B cell (primary cell): ENCODE measurements at regions of chr11 and their contacts with region 1.

Region 1: DNA sequence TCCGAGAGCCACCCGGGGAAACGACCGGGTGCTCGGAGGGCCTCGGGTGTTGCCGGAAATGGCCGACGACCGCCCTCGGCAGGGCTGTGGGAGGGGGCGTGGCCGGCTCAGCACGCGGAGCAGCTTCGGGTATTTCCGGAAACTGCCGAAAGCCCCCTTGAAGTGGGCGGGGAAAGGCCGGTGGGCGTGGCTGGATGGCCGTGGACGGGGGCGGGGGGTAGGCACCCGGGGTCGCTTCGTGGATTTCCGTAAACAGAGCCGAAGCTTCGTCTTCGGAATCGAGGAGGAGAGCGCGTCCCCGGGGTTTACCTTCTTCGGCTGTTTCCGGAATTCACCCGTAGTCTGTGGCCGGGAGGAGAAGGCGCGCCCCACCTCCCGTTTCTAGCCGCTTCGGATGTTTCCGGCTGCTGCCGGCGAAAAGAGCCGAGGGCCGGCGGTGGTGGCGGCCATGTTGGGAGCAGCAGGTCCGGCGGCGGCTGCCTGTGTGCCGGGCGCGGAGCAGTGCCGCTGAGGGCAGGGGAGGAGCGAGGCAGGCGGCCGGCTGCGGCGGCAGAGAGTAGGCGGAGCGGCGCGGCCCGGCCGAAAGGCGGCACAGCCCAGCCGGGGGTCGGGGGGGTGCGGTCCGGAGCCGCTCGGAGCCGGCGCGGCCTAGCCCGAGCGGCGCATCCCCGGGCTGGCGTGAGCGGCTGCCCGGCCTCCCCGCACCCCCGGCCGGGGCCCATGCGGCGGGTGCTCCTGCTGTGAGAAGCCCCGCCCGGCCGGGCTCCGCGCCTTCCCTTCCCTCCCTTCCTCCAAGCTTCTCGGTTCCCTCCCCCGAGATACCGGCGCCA is at the start of gene MARK2:
- DNase-seq: peak; percentile 100
- ATAC-seq: peak; percentile 82
- H3K4me3 ChIP-seq: peak within 1 kb of the TSS; percentile 67 to 94 (median 90)
- H3K4me3 Mint-ChIP-seq: peak within 1 kb of the TSS; percentile 91
- H3K27ac ChIP-seq: peak within 1 kb of the TSS; percentile 82 to 91
- H3K27ac Mint-ChIP-seq: peak within 1 kb of the TSS; percentile 94
- H3K4me1 ChIP-seq: peaks cover 38 to 46% of the 10 kb centered on the region in 2 donors
- H3K4me1 Mint-ChIP-seq: peaks cover 59% of the 10 kb centered on the region
- H3K27me3 ChIP-seq: no peaks in the 10 kb centered on the region
- H3K27me3 Mint-ChIP-seq: no peaks in the 10 kb centered on the region
- CTCF ChIP-seq: no peak
- total RNA-seq, gene MARK2: 55.9 and 58.1 TPM in 2 replicates

Region 2: DNA sequence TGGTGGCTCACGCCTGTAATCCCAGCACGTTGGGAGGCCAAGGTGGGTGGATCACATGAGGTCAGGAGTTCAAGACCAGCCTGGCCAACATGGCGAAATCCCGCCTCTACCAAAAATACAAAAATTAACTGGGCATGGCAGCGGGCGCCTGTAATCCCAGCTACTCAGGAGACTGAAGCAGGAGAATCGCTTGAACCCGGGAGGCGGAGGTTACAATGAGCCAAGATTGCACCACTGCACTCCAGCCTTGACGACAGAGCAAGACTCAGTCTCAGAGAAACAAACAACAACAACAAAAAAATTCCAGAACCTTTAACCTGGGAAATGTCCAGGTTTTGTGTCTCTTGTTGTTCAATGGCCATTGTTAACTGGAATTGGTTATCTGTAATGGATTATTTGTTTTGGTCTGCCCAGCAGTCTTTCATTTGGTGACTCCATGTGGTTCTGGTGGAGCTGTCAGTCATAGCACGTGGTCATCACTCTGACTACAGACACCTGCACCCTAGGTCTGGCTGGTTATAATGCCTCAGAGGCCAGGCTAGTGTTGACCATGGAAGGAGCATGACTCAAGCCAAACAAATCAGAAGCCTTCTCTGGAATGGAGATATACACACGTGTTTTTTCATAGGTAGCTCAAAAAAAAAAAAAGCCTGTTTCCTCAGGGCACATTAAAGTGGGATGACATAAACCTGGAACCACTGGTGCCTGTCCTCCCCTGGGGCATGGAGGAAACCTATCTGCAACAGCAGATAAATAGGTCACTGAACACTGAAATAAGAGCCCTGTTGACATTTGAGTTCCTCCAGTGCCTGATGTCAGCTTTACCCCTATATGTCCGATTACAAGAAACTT is 216.7 kb before region 1 on chr11:
- CTCF ChIA-PET with region 1: no interaction called
- POLR2A ChIA-PET with region 1: no interaction called
- intact Hi-C with region 1: no loop called
- DNase-seq: no peak
- ATAC-seq: no peak
- H3K4me3 ChIP-seq: no peak overlapping the region
- H3K4me3 Mint-ChIP-seq: no peak overlapping the region
- H3K27ac ChIP-seq: no peak overlapping the region
- H3K27ac Mint-ChIP-seq: no peak overlapping the region
- H3K4me1 ChIP-seq: no peaks in the 10 kb centered on the region
- H3K4me1 Mint-ChIP-seq: no peaks in the 10 kb centered on the region
- H3K27me3 ChIP-seq: peaks cover 0 to 5% (median 0%) of the 10 kb centered on the region in 4 experiments
- H3K27me3 Mint-ChIP-seq: no peaks in the 10 kb centered on the region
- CTCF ChIP-seq: no peak

Region 3: DNA sequence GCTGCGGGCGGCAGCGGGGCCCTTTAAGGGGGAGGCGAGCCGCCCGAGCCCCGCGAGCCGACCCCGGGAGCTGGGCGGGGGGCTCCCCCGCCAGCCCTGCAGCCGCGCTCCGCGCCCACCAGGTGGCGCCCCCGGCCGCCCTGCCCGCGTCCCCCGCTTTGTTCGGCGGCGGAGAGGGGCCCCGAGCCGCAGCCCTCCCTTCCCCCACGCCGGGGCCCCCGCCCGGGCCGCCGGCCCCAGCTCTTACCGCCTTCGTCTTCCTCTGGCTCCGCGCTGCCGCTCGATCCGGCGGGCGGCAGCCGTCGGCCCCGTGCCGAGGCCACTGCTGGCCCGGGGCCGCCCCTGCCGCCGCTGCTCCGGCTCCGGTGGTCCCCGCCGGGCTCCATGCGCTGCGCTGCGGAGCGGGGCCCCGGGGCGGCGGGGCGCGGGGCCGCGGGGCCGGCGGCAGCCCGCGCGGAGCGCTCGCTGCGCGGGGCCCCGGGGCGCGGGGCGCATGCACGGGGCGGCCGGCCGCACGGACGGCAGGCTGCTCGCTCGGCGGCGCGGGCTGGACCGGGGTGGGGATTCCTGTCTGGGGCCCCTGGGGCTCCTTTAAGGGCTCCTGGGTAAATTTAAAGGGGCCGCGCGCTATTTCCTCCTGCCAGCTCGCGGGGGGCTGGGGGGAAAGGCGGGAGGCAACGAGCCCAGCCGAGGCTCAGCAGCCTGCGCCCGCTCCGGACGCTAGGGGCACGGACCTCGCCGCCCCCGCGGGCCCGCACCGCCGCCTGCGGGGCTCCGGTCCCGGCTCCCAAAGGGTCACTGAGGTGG is 70.5 kb before region 1 on chr11 and contains the start of gene ZFTA:
- CTCF ChIA-PET with region 1: interaction called, 19 read pairs
- POLR2A ChIA-PET with region 1: interaction called, 4 read pairs
- intact Hi-C with region 1: loop called (anchors 1 kb)
- DNase-seq: peak; percentile 80
- ATAC-seq: peak; percentile 68
- H3K4me3 ChIP-seq: peak within 1 kb of the TSS; percentile 18 to 89 (median 67)
- H3K4me3 Mint-ChIP-seq: peak within 1 kb of the TSS; percentile 89
- H3K27ac ChIP-seq: peak within 1 kb of the TSS in 1 of 2 donors; percentile 44
- H3K27ac Mint-ChIP-seq: peak within 1 kb of the TSS; percentile 78
- H3K4me1 ChIP-seq: peaks cover 14 to 21% of the 10 kb centered on the region in 2 donors
- H3K4me1 Mint-ChIP-seq: peaks cover 13% of the 10 kb centered on the region
- H3K27me3 ChIP-seq: peaks cover 0 to 17% (median 2%) of the 10 kb centered on the region in 4 experiments
- H3K27me3 Mint-ChIP-seq: peaks cover 10% of the 10 kb centered on the region
- CTCF ChIP-seq: peak; percentile 67
- total RNA-seq, gene ZFTA: 11.8 and 13.3 TPM in 2 replicates

Region 4: GRCh38 chr11:63906585-63906984 is 67.7 kb after region 1 on chr11:
- CTCF ChIA-PET with region 1: interaction called, 22 read pairs
- POLR2A ChIA-PET with region 1: interaction called, 3 read pairs
- intact Hi-C with region 1: loop called (anchors 1 kb)
- DNase-seq: peak; percentile 54
- ATAC-seq: peak; percentile 47
- H3K4me3 ChIP-seq: no peak overlapping the region
- H3K4me3 Mint-ChIP-seq: no peak overlapping the region
- H3K27ac ChIP-seq: no peak overlapping the region
- H3K27ac Mint-ChIP-seq: no peak overlapping the region
- H3K4me1 ChIP-seq: no peaks in the 10 kb centered on the region
- H3K4me1 Mint-ChIP-seq: no peaks in the 10 kb centered on the region
- H3K27me3 ChIP-seq: no peaks in the 10 kb centered on the region
- H3K27me3 Mint-ChIP-seq: no peaks in the 10 kb centered on the region
- CTCF ChIP-seq: peak; percentile 29

Region 5: DNA sequence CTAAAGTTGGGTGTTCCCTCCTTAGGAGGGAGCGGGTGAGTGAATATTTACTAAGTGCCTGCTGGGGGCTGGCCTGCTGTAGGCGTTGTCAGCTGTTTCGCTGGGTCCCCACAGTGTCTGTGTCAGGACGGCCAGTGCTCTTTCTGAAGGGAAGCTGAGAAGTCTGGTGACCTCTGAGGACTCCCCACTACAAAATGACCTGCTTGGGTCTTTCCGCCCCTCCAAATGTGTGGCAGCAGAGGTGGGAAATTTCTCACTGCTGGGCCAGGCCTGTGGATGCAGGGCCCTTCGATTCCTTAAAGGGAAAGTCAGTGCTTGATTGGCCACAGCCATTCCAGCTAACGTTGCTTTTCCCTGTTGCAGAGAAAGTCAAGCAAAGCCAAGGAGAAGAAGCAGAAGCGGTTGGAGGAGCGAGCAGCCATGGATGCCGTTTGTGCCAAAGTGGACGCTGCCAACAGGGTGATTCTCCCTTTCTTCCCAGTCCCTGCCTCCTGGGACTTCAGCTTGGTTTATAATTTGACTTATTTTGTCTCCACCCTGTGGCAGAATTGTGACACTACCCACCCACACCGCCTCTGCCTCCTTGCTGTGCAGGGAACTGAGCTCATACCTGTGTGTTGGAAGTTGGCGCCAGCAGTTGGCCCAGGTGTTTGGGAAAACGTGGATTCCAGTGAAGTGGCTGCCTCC is 106.7 kb after region 1 on chr11:
- CTCF ChIA-PET with region 1: interaction called, 254 read pairs
- POLR2A ChIA-PET with region 1: interaction called, 11 read pairs
- intact Hi-C with region 1: loop called (anchors 1 kb)
- DNase-seq: peak; percentile 63
- ATAC-seq: peak; percentile 63
- H3K4me3 ChIP-seq: no peak overlapping the region
- H3K4me3 Mint-ChIP-seq: no peak overlapping the region
- H3K27ac ChIP-seq: no peak overlapping the region
- H3K27ac Mint-ChIP-seq: peak overlapping the region; percentile 15
- H3K4me1 ChIP-seq: peaks cover 12 to 14% of the 10 kb centered on the region in 2 donors
- H3K4me1 Mint-ChIP-seq: peaks cover 20% of the 10 kb centered on the region
- H3K27me3 ChIP-seq: no peaks in the 10 kb centered on the region
- H3K27me3 Mint-ChIP-seq: no peaks in the 10 kb centered on the region
- CTCF ChIP-seq: peak; percentile 61

Region 6: DNA sequence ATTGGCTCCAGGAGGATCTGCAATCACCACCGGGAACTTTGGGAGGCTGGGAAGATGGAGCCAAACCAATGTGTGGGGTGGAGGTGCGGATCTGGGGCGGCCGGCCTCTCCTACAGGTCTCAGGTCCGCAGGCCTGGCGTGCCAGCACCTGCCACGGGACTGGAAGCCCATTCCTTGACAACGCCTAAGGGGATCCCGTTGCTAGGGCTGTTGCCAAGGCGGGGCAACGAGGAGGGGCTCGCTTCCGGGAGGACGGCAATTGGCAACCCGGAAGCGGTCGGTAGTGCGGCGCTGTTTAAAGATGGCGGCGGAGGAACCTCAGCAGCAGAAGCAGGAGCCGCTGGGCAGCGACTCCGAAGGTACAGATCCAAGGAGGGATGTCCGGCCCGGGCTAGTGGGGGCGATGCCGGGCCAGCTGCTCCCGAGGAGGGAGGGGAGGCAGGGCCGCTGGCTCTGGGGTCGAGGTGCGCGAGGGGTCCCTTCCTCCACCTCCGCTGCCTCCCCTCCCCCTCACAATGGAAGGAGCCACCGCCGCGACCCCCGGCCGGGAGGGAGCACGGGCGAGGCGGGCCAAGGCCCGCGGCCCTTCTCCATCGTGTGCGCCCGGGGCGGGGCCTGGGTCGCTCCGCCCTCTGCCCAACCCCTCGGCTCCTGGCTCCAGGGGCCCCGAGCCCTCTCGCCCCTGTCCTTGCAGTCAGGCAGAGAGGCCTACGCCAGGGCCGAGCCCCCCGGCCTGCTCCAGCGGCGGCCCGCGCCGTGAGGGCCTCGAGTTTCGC is 147.5 kb after region 1 on chr11 and contains the start of gene OTUB1:
- CTCF ChIA-PET with region 1: interaction called, 8 read pairs
- POLR2A ChIA-PET with region 1: interaction called, 3 read pairs
- intact Hi-C with region 1: loop called (anchors 1 kb)
- DNase-seq: peak; percentile 89
- ATAC-seq: peak; percentile 84
- H3K4me3 ChIP-seq: peak within 1 kb of the TSS; percentile 76 to 96 (median 93)
- H3K4me3 Mint-ChIP-seq: peak within 1 kb of the TSS; percentile 99
- H3K27ac ChIP-seq: peak within 1 kb of the TSS; percentile 76 to 94
- H3K27ac Mint-ChIP-seq: peak within 1 kb of the TSS; percentile 97
- H3K4me1 ChIP-seq: peaks cover 22 to 39% of the 10 kb centered on the region in 2 donors
- H3K4me1 Mint-ChIP-seq: peaks cover 42% of the 10 kb centered on the region
- H3K27me3 ChIP-seq: no peaks in the 10 kb centered on the region
- H3K27me3 Mint-ChIP-seq: no peaks in the 10 kb centered on the region
- CTCF ChIP-seq: no peak
- total RNA-seq, gene OTUB1: 71.0 and 78.2 TPM in 2 replicates

Region 7: DNA sequence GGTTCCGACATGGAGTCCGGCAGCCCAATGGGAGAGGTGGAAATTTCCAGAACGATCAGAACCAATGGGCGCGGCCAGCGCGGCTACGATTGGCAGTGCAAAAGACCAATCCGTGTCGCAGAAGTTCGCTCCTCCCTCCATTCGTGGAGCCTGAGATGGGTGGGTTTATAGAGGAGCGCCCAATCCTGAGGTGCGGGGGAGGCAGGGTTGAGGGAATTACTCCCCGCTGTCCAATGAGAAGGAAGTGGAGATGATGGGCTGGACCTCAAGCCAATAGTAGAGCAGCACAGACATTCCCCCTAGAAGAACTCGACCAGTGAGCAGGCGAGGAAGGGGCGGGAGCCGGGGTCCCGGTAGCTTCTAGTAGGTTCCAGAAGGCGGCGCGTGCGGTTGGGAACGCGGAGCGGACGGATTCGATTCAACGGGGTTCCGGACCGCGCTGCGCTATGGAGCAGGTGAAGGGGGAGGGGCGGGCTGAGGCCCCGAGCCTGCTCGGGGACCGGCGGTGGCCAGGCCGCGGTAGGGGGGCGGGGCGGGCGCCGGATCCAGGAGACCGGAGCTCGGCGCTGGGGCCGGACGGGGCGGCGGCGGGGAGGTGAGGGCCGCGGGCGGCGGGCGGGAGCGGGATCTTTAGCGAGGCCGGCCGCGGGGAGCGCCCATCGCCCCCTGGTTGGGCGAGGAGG is 347.1 kb after region 1 on chr11 and contains the start of gene STIP1:
- CTCF ChIA-PET with region 1: no interaction called
- POLR2A ChIA-PET with region 1: no interaction called
- intact Hi-C with region 1: loop called (anchors 1 kb)
- DNase-seq: peak; percentile 100
- ATAC-seq: peak; percentile 85
- H3K4me3 ChIP-seq: peak within 1 kb of the TSS; percentile 16 to 95 (median 83)
- H3K4me3 Mint-ChIP-seq: no peak within 1 kb of the TSS
- H3K27ac ChIP-seq: peak within 1 kb of the TSS; percentile 59 to 86
- H3K27ac Mint-ChIP-seq: peak within 1 kb of the TSS; percentile 94
- H3K4me1 ChIP-seq: peaks cover 13 to 24% of the 10 kb centered on the region in 2 donors
- H3K4me1 Mint-ChIP-seq: peaks cover 40% of the 10 kb centered on the region
- H3K27me3 ChIP-seq: no peaks in the 10 kb centered on the region
- H3K27me3 Mint-ChIP-seq: no peaks in the 10 kb centered on the region
- CTCF ChIP-seq: peak; percentile 37
- total RNA-seq, gene STIP1: 78.7 and 87.8 TPM in 2 replicates